Activated CD8-positive, alpha-beta memory T cell treated with anti-CD3 and anti-CD28 coated beads, Interleukin-2, amount 10 ng/mL, durations not matched to agents 7 days and 5 days (primary cell): ENCODE measurements at regions of chr10 and their contacts with region 1.

Region 1: DNA sequence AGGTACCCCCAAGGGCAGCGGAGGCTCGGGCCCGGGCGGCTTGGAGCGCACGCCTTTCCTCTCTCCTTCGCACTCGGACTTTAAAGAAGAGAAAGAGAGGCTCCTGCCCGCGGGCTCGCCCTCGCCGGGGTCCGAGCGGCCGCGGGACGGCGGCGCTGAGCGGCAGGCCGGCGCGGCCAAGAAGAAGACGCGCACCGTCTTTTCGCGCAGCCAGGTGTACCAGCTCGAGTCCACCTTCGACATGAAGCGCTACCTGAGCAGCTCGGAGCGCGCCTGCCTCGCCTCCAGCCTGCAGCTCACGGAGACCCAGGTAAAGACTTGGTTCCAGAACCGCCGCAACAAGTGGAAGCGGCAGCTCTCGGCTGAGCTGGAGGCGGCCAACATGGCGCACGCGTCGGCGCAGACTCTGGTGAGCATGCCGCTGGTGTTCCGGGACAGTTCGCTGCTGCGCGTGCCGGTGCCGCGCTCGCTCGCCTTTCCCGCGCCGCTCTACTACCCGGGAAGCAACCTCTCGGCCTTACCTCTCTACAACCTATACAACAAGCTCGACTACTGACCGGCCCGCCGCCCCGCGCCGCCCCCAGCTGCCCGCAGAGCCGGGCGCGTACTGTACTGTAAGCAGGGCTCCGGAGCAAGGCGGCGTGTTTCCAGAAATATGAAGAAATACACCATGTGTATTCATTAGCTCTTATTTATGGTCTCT is 1.8 kb downstream of the HMX2 start:
- DNase-seq: no peak
- ATAC-seq: no peak
- H3K4me3 Mint-ChIP-seq: peak overlapping the region; percentile 62
- H3K27ac Mint-ChIP-seq: peak overlapping the region; percentile 28
- H3K4me1 Mint-ChIP-seq: peaks cover 53% of the 10 kb centered on the region
- H3K27me3 Mint-ChIP-seq: peaks cover 55% of the 10 kb centered on the region

Region 2: GRCh38 chr10:123132576-123133477 is 16.9 kb before region 1 on chr10:
- CTCF ChIA-PET with region 1: interaction called, 26 read pairs
- DNase-seq: peak; percentile 89
- ATAC-seq: peak; percentile 71
- H3K4me3 Mint-ChIP-seq: peak overlapping the region; percentile 41
- H3K27ac Mint-ChIP-seq: peak overlapping the region; percentile 68
- H3K4me1 Mint-ChIP-seq: peaks cover 28% of the 10 kb centered on the region
- H3K27me3 Mint-ChIP-seq: peaks cover 87% of the 10 kb centered on the region

Region 3: GRCh38 chr10:123270221-123270620 is 120.5 kb after region 1 on chr10:
- CTCF ChIA-PET with region 1: no interaction called
- DNase-seq: no peak
- ATAC-seq: no peak
- H3K4me3 Mint-ChIP-seq: no peak overlapping the region
- H3K27ac Mint-ChIP-seq: no peak overlapping the region
- H3K4me1 Mint-ChIP-seq: no peaks in the 10 kb centered on the region
- H3K27me3 Mint-ChIP-seq: peaks cover 9% of the 10 kb centered on the region